ENCODE measurements at regions of chr11 and their contacts with region 1.

Region 1: GRCh38 chr11:116454020-116454645 is 318.7 kb downstream of the BUD13 start:
- DNase-seq: no peak
- ATAC-seq: peak; percentile 39 to 66 (median 49)
- H3K4me3 ChIP-seq: no peak overlapping the region
- H3K27ac ChIP-seq: no peak overlapping the region
- H3K4me1 ChIP-seq: no peaks in the 10 kb centered on the region
- H3K27me3 ChIP-seq: no peaks in the 10 kb centered on the region
- CTCF ChIP-seq: peak; percentile 58

Region 2: DNA sequence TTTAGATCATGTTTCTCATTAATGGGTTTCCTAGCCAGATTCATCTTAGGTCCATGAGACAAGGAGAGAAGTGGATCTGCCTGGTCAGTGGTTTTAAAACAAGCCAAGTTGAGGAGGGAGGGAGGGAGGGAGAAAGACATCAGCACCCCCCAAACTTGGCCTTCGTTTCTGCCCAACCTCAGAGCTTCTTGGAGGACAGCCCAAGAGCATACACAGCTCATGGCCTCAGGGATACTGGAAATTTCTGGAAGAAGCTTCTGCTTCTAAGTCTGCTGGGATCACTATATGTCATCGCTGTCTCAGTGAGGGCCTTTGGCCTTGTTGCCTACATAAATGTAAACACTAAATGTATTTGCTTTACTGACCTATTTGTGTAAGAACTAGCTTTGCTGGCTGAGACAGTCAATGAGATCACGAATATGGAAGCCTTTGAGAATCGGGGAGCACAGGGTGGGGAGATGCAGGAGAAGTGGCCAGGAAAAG is 56.5 kb before region 1 on chr11:
- intact Hi-C with region 1: no loop called
- DNase-seq: no peak
- ATAC-seq: no peak
- H3K4me3 ChIP-seq: no peak overlapping the region
- H3K27ac ChIP-seq: no peak overlapping the region
- H3K4me1 ChIP-seq: no peaks in the 10 kb centered on the region
- H3K27me3 ChIP-seq: peaks cover 0 to 2% (median 0%) of the 10 kb centered on the region in 3 donors
- CTCF ChIP-seq: no peak

Region 3: GRCh38 chr11:116641561-116642045 is 187.5 kb after region 1 on chr11:
- intact Hi-C with region 1: loop called (anchors 1 to 5 kb)
- DNase-seq: peak in 1 of 2 donors; percentile 22
- ATAC-seq: peak; percentile 71 to 74 (median 73)
- H3K4me3 ChIP-seq: no peak overlapping the region
- H3K27ac ChIP-seq: no peak overlapping the region
- H3K4me1 ChIP-seq: no peaks in the 10 kb centered on the region
- H3K27me3 ChIP-seq: peaks cover 0 to 5% (median 2%) of the 10 kb centered on the region in 3 donors
- CTCF ChIP-seq: peak; percentile 66

Region 4: GRCh38 chr11:116691771-116692177 is 237.6 kb after region 1 on chr11:
- intact Hi-C with region 1: loop called (anchors 2 to 5 kb)
- DNase-seq: peak in 1 of 2 donors; percentile 36
- ATAC-seq: peak; percentile 59 to 78 (median 71)
- H3K4me3 ChIP-seq: no peak overlapping the region
- H3K27ac ChIP-seq: no peak overlapping the region
- H3K4me1 ChIP-seq: no peaks in the 10 kb centered on the region
- H3K27me3 ChIP-seq: no peaks in the 10 kb centered on the region
- CTCF ChIP-seq: peak; percentile 68